PC-9 (cell line): ENCODE measurements at regions of chr2 and their contacts with region 1.

Region 1: GRCh38 chr2:96638144-96639121 is at the start of gene KANSL3:
- DNase-seq: peak; percentile 81 to 94
- H3K4me3 ChIP-seq: peak within 1 kb of the TSS; percentile 96
- H3K27ac ChIP-seq: peak within 1 kb of the TSS; percentile 76
- H3K4me1 ChIP-seq: peaks cover 38% of the 10 kb centered on the region
- H3K27me3 ChIP-seq: no peaks in the 10 kb centered on the region
- CTCF ChIP-seq: no peak
- total RNA-seq, gene KANSL3: 52.0 and 53.8 TPM in 2 replicates

Region 2: DNA sequence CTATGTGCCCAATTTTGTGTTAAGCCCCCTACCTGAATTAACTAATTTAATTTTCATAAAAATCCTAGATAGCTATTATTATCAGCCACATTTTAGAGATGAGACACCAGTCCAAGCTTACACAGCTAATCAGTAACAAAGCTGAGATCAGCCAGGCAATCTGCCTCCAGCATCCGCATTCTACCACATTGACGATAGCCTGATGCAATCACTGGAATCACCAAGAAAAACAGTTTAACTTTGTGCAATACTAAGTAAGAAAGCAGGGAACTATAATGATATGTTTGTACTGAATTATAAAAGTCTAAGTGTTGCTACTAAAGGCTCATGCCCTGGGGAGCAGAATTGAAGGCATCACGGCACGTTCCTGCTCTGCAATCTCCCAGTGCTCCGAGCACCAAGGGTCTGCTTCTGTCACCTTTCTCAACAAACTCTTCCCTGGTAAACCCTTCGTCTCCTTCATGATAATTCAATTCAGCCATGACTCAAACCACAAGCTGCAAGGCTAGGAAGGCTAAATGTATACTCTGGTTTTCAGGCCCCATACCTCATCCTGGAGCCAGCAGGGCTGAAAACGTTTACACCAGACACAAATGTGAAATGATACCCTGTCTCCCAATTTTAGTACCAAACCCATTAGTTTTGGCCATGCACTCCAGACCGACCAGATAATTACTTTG is 19.7 kb before region 1 on chr2:
- CTCF ChIA-PET with region 1: interaction called, 3 read pairs
- POLR2A ChIA-PET with region 1: interaction called, 16 read pairs
- intact Hi-C with region 1: no loop called
- DNase-seq: no peak
- H3K4me3 ChIP-seq: no peak overlapping the region
- H3K27ac ChIP-seq: no peak overlapping the region
- H3K4me1 ChIP-seq: no peaks in the 10 kb centered on the region
- H3K27me3 ChIP-seq: no peaks in the 10 kb centered on the region
- CTCF ChIP-seq: no peak

Region 3: GRCh38 chr2:96665083-96665569 is 26.7 kb after region 1 on chr2:
- CTCF ChIA-PET with region 1: no interaction called
- POLR2A ChIA-PET with region 1: interaction called, 9 read pairs
- intact Hi-C with region 1: loop called (anchors 1 kb)
- DNase-seq: peak; percentile 76 to 99
- H3K4me3 ChIP-seq: peak overlapping the region; percentile 23; the same call in 1 of the 2 replicates
- H3K27ac ChIP-seq: peak overlapping the region; percentile 82
- H3K4me1 ChIP-seq: peaks cover 19% of the 10 kb centered on the region
- H3K27me3 ChIP-seq: no peaks in the 10 kb centered on the region
- CTCF ChIP-seq: no peak

Region 4: GRCh38 chr2:96679848-96680247 is 41.4 kb after region 1 on chr2:
- CTCF ChIA-PET with region 1: no interaction called
- POLR2A ChIA-PET with region 1: no interaction called
- intact Hi-C with region 1: no loop called
- DNase-seq: no peak
- H3K4me3 ChIP-seq: no peak overlapping the region
- H3K27ac ChIP-seq: no peak overlapping the region
- H3K4me1 ChIP-seq: no peaks in the 10 kb centered on the region
- H3K27me3 ChIP-seq: no peaks in the 10 kb centered on the region
- CTCF ChIP-seq: no peak

Region 5: DNA sequence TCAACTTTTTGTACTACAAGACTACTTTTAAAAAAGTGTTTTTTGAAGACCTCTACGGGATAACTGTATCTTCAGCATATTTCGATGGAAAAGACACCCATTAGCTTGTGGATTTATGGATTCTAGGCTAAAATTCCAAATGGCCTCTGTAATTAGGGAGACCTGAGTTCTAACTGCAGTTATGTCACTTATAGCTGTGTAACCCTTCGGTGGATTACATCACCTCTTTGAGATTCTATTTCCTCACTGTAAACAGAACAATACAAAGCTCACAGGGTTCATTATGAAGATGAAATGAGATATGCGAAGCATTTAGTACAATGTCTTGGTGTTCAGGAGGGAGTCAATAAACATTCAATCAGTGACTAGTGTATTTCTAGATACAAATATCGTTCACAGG is 77.2 kb after region 1 on chr2:
- CTCF ChIA-PET with region 1: no interaction called
- POLR2A ChIA-PET with region 1: no interaction called
- intact Hi-C with region 1: loop called (anchors 10 kb)
- DNase-seq: no peak
- H3K4me3 ChIP-seq: no peak overlapping the region
- H3K27ac ChIP-seq: peak overlapping the region; percentile 48; the same call in 1 of the 2 replicates
- H3K4me1 ChIP-seq: peaks cover 11% of the 10 kb centered on the region
- H3K27me3 ChIP-seq: no peaks in the 10 kb centered on the region
- CTCF ChIP-seq: no peak

Region 6: DNA sequence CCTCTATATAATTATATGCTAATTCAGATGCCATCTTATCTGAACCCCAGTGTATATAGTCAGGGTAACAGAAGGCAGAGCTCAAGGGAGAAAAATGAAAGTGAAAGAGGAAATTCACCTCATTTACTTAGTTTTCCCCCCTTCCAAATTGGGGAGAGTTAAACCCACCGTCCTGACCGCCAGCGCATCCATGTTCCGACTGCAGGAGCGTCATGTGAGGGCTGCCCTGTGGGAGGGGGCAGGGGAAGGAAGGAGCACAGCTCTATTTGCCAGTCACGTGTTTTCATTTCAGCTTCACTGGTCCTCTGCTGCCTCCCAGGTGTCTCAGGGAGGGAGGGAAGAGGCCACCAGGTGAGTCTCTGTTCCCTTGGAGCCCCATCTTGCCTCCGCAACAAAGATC is 135.5 kb after region 1 on chr2:
- CTCF ChIA-PET with region 1: no interaction called
- POLR2A ChIA-PET with region 1: interaction called, 12 read pairs
- intact Hi-C with region 1: no loop called
- DNase-seq: no peak
- H3K4me3 ChIP-seq: no peak overlapping the region
- H3K27ac ChIP-seq: no peak overlapping the region
- H3K4me1 ChIP-seq: peaks cover 44% of the 10 kb centered on the region
- H3K27me3 ChIP-seq: no peaks in the 10 kb centered on the region
- CTCF ChIP-seq: no peak